IMR-90 (cell line): ENCODE measurements at regions of chr5 and their contacts with region 1.

Region 1: GRCh38 chr5:72767289-72767998 is 49.0 kb upstream of the TNPO1 start:
- DNase-seq: no peak
- ATAC-seq: no peak
- H3K4me3 ChIP-seq: no peak overlapping the region
- H3K27ac ChIP-seq: no peak overlapping the region
- H3K4me1 ChIP-seq: no peaks in the 10 kb centered on the region
- H3K27me3 ChIP-seq: peaks cover 10% of the 10 kb centered on the region
- CTCF ChIP-seq: no peak
- POLR2A ChIP-seq: no peak
- RAD21 ChIP-seq: no peak

Region 2: GRCh38 chr5:72723581-72723980 is 43.9 kb before region 1 on chr5:
- CTCF ChIA-PET with region 1: no interaction called
- POLR2A ChIA-PET with region 1: no interaction called
- dilution Hi-C with region 1: no loop called
- in situ Hi-C with region 1: no loop called
- intact Hi-C with region 1: loop called (anchors 1 kb)
- DNase-seq: no peak
- ATAC-seq: no peak
- H3K4me3 ChIP-seq: no peak overlapping the region
- H3K27ac ChIP-seq: no peak overlapping the region
- H3K4me1 ChIP-seq: no peaks in the 10 kb centered on the region; the same call in 1 of the 2 replicates
- H3K27me3 ChIP-seq: peaks cover 3% of the 10 kb centered on the region; the same call in 1 of the 2 replicates
- CTCF ChIP-seq: no peak
- POLR2A ChIP-seq: no peak
- RAD21 ChIP-seq: no peak

Region 3: DNA sequence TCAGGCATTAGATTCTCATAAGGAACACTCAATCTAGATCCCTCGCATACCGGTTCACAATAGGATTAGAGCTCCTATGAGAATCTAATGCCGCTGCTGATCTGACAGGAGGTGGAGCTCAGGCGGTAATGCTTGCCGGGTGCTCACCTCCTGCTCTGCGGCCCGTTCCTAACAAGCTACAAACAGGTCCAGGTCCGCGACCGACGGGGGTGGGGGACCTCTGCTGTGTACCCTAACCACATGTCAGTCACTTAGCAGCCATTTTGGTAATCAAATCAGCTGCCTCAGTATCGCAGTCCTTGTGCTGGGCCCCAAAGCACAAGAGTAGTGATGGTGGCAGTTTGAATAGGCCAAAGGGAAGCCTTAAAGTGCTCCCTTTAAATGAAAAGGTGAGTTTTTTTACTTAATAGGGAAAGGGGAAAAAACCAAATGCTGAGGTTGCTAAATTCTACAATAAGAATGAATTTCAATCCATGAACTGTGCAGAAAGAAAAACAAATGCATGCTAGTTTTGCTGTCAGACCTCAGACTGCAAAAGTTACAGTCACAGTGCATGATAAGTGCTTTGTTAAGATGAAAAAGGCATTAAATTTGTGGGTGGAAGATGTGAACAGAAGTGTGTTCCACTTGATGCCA is 18.0 kb before region 1 on chr5:
- CTCF ChIA-PET with region 1: no interaction called
- POLR2A ChIA-PET with region 1: no interaction called
- dilution Hi-C with region 1: no loop called
- in situ Hi-C with region 1: no loop called
- intact Hi-C with region 1: no loop called
- DNase-seq: no peak
- ATAC-seq: no peak
- H3K4me3 ChIP-seq: no peak overlapping the region
- H3K27ac ChIP-seq: no peak overlapping the region
- H3K4me1 ChIP-seq: no peaks in the 10 kb centered on the region
- H3K27me3 ChIP-seq: peaks cover 2% of the 10 kb centered on the region
- CTCF ChIP-seq: no peak
- POLR2A ChIP-seq: no peak
- RAD21 ChIP-seq: no peak

Region 4: DNA sequence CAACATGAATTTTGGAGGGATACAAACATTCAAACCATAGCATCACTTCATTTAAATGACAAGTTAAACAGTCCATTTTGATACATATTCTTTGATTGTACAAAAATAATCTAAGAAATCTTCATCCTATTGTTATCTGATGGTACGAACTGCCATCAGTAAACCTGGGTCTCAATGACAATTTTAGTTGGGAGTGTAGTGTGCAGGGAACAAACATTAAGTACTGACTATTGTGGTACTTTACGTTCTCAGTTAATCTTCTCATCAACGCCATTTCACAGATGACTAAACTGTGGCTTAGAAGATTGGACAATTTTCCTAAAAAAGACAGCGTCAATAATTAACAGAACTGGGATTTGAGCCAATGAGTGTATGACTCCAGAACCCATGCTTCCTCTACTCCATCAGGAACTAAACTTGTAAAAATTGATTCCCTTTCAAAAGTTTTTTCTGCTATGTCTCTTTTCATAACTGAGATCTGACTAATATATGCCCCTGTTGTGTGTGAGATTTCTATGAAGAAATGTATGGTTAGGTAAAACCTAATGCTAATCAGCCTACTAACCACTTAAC is 70.2 kb after region 1 on chr5:
- CTCF ChIA-PET with region 1: no interaction called
- POLR2A ChIA-PET with region 1: no interaction called
- dilution Hi-C with region 1: no loop called
- in situ Hi-C with region 1: no loop called
- intact Hi-C with region 1: no loop called
- DNase-seq: no peak
- ATAC-seq: no peak
- H3K4me3 ChIP-seq: no peak overlapping the region
- H3K27ac ChIP-seq: no peak overlapping the region
- H3K4me1 ChIP-seq: peaks cover 10% of the 10 kb centered on the region
- H3K27me3 ChIP-seq: no peaks in the 10 kb centered on the region
- CTCF ChIP-seq: no peak
- POLR2A ChIP-seq: no peak
- RAD21 ChIP-seq: no peak